CD8-positive, alpha-beta T cell (primary cell): ENCODE measurements at regions of chr7 and their contacts with region 1.

Region 1: GRCh38 chr7:100586266-100587025 is at the start of gene FBXO24:
- DNase-seq: peak; percentile 98 to 100 (median 99)
- ATAC-seq: peak; percentile 80
- H3K4me3 ChIP-seq: peak within 1 kb of the TSS; percentile 93 to 96
- H3K4me3 Mint-ChIP-seq: peak within 1 kb of the TSS; percentile 96
- H3K27ac ChIP-seq: peak within 1 kb of the TSS; percentile 74 to 94
- H3K27ac Mint-ChIP-seq: peak within 1 kb of the TSS; percentile 57
- H3K4me1 ChIP-seq: peaks cover 22% of the 10 kb centered on the region
- H3K4me1 Mint-ChIP-seq: peaks cover 39% of the 10 kb centered on the region
- H3K27me3 ChIP-seq: no peaks in the 10 kb centered on the region
- H3K27me3 Mint-ChIP-seq: peaks cover 3% of the 10 kb centered on the region
- CTCF ChIP-seq: no peak
- total RNA-seq, gene FBXO24: 0.30 to 0.53 TPM

Region 2: GRCh38 chr7:99997545-99998137 is 588.8 kb before region 1 on chr7:
- CTCF ChIA-PET with region 1: no interaction called
- POLR2A ChIA-PET with region 1: no interaction called
- intact Hi-C with region 1: no loop called
- DNase-seq: peak; percentile 51 to 91 (median 74)
- ATAC-seq: peak; percentile 88
- H3K4me3 ChIP-seq: peak overlapping the region; percentile 48 to 54
- H3K4me3 Mint-ChIP-seq: peak overlapping the region; percentile 73
- H3K27ac ChIP-seq: peak overlapping the region; percentile 64 to 82
- H3K27ac Mint-ChIP-seq: peak overlapping the region; percentile 92
- H3K4me1 ChIP-seq: peaks cover 12% of the 10 kb centered on the region
- H3K4me1 Mint-ChIP-seq: peaks cover 11% of the 10 kb centered on the region
- H3K27me3 ChIP-seq: no peaks in the 10 kb centered on the region
- H3K27me3 Mint-ChIP-seq: no peaks in the 10 kb centered on the region
- CTCF ChIP-seq: no peak

Region 3: DNA sequence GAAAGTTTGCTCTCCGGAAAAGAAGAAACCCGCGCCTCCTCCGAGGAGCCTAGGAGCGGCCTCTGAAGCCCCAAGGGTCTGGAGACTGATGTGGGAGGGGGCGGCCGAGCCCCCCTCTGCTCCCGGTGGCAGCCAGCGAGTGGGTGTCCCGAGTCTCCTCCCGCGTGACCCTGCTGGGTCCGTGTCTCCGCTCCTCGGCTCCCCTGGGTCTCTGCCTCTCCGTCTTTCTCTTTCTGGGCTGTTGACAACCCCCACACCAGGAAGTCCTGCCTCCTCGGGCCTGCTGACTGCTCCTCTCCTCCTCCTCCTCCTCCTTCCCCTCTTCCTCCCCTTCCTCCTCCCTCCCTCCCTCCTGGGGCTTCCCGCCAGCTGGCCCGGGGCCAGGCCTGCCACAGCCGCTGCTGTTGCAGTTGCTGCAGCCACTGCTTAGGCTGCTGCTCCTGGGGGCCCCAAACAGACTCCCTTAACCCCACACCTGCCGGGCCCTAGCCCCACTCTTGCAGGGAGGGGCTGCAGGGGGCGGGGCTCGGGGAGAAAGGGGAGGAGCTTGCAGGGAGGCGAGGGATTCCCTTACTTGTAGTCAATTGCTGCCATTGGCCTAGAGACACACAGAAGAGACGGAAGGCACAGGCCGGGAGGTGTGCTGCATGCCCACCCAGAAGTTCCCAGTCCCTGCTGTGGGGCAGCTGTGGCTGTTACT is 107.3 kb before region 1 on chr7 and contains the start of gene TSC22D4:
- CTCF ChIA-PET with region 1: interaction called, 5 read pairs
- POLR2A ChIA-PET with region 1: interaction called, 5 read pairs
- intact Hi-C with region 1: loop called in 1 of 2 experiments (anchors 1 kb)
- DNase-seq: peak; percentile 85 to 97 (median 94)
- ATAC-seq: peak; percentile 69
- H3K4me3 ChIP-seq: peak within 1 kb of the TSS; percentile 82 to 96
- H3K4me3 Mint-ChIP-seq: peak within 1 kb of the TSS; percentile 93
- H3K27ac ChIP-seq: peak within 1 kb of the TSS; percentile 72 to 75
- H3K27ac Mint-ChIP-seq: peak within 1 kb of the TSS; percentile 89
- H3K4me1 ChIP-seq: peaks cover 54% of the 10 kb centered on the region
- H3K4me1 Mint-ChIP-seq: peaks cover 44% of the 10 kb centered on the region
- H3K27me3 ChIP-seq: no peaks in the 10 kb centered on the region
- H3K27me3 Mint-ChIP-seq: no peaks in the 10 kb centered on the region
- CTCF ChIP-seq: no peak
- total RNA-seq, gene TSC22D4: 30.7 to 32.3 TPM

Region 4: GRCh38 chr7:100568896-100569844 is 17.3 kb before region 1 on chr7:
- CTCF ChIA-PET with region 1: interaction called, 210 read pairs
- POLR2A ChIA-PET with region 1: interaction called, 46 read pairs
- intact Hi-C with region 1: loop called (anchors 1 kb)
- DNase-seq: peak in 7 of 9 experiments; percentile 32 to 76 (median 63)
- ATAC-seq: peak; percentile 30
- H3K4me3 ChIP-seq: peak overlapping the region; percentile 41 to 50
- H3K4me3 Mint-ChIP-seq: peak overlapping the region; percentile 66
- H3K27ac ChIP-seq: peak overlapping the region; percentile 40 to 49
- H3K27ac Mint-ChIP-seq: peak overlapping the region; percentile 69
- H3K4me1 ChIP-seq: peaks cover 54% of the 10 kb centered on the region
- H3K4me1 Mint-ChIP-seq: peaks cover 41% of the 10 kb centered on the region
- H3K27me3 ChIP-seq: no peaks in the 10 kb centered on the region
- H3K27me3 Mint-ChIP-seq: no peaks in the 10 kb centered on the region
- CTCF ChIP-seq: peak; percentile 38

Region 5: DNA sequence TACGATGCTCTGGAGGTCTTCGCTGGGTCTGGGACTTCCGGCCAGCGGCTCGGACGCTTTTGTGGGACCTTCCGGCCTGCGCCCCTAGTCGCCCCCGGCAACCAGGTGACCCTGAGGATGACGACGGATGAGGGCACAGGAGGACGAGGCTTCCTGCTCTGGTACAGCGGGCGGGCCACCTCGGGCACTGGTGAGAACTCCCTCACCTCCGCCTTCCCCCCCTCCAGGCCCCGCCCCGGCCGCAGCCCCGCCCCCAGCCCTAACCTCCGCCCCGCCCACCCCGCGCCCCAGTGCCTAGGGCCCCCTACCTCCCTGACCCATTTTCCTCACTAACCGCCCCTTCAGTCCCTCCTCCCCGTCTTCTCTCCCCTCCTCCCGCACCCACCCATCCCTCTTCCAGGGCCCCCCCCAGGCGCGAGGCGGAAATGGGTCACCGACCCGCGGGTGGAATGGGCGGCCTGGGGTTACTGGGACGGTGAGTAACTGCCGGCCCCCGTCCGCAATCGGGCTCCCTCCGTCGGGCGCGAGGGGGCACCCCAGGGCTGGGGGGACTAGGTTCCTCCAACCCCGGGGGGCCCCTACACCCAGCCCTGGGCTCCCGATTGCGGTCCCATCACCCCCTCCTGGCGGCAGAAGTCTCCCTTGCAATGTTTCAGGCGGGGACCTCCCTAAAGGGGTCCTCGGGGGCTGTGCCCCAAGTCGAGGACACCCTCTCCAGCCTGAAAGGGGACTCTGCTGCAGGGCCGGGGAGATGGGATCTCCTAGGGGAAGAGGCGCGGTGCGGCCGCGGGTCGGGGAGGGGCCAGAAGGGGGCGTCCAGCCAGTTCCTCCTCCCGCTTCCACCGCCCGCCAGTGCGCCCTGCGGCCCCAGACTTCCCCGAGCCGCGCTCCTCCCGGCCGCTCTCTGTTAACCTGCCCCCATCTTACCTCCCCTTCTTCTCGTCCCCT is 17.9 kb after region 1 on chr7:
- CTCF ChIA-PET with region 1: interaction called, 9 read pairs
- POLR2A ChIA-PET with region 1: interaction called, 11 read pairs
- intact Hi-C with region 1: loop called (anchors 1 kb)
- DNase-seq: peak; percentile 45 to 87 (median 77)
- ATAC-seq: peak; percentile 76
- H3K4me3 ChIP-seq: peak overlapping the region; percentile 62 to 79
- H3K4me3 Mint-ChIP-seq: peak overlapping the region; percentile 85
- H3K27ac ChIP-seq: peak overlapping the region; percentile 53 to 70
- H3K27ac Mint-ChIP-seq: peak overlapping the region; percentile 87
- H3K4me1 ChIP-seq: peaks cover 19% of the 10 kb centered on the region
- H3K4me1 Mint-ChIP-seq: peaks cover 22% of the 10 kb centered on the region
- H3K27me3 ChIP-seq: peaks cover 0 to 3% of the 10 kb centered on the region in 2 experiments
- H3K27me3 Mint-ChIP-seq: no peaks in the 10 kb centered on the region
- CTCF ChIP-seq: peak; percentile 50

Region 6: GRCh38 chr7:100611974-100612729 is 25.7 kb after region 1 on chr7 and contains the start of gene MOSPD3:
- CTCF ChIA-PET with region 1: interaction called, 9 read pairs
- POLR2A ChIA-PET with region 1: interaction called, 58 read pairs
- intact Hi-C with region 1: loop called (anchors 1 kb)
- DNase-seq: peak; percentile 96 to 100 (median 98)
- ATAC-seq: peak; percentile 89
- H3K4me3 ChIP-seq: peak within 1 kb of the TSS; percentile 68 to 96
- H3K4me3 Mint-ChIP-seq: peak within 1 kb of the TSS; percentile 99
- H3K27ac ChIP-seq: peak within 1 kb of the TSS; percentile 93 to 98
- H3K27ac Mint-ChIP-seq: peak within 1 kb of the TSS; percentile 100
- H3K4me1 ChIP-seq: peaks cover 19% of the 10 kb centered on the region
- H3K4me1 Mint-ChIP-seq: peaks cover 24% of the 10 kb centered on the region
- H3K27me3 ChIP-seq: no peaks in the 10 kb centered on the region
- H3K27me3 Mint-ChIP-seq: no peaks in the 10 kb centered on the region
- CTCF ChIP-seq: no peak
- total RNA-seq, gene MOSPD3: 10.3 to 10.5 TPM

Region 7: DNA sequence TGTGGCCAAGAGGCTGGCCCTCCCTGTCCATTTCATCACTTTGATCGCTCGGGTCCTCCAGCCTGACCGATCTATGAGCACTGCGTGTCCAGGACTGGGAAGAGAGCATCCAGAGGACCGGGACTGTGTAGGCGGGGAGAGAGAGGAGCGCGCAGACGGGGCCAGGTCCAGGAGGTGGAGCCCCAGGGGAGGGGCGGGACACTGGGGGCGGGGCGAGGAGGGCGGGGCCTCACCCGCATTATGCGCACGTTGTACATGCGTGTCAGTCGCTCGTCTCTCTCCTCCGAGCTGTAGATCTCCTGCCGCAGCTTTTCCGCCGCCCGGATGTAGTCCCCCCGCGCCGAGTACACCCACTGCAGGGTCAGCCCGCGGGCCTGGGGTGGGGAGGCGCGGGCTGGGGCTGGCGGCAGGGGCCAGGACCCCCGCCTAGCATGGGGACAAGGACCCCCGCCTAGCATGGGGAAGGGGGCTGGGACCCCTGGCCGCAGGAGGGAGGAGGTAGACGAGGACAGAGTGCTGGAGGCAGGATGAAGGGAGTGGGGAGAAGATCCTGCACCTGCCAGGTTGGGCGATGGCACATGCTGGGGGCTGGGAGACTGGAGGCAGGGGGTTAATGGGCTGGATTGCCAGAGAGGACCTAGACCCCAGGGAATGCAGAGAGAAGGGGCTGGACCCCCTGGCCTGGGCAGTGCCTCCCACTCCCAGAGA is 40.2 kb after region 1 on chr7:
- CTCF ChIA-PET with region 1: interaction called, 3 read pairs
- POLR2A ChIA-PET with region 1: interaction called, 17 read pairs
- intact Hi-C with region 1: loop called (anchors 1 kb)
- DNase-seq: peak; percentile 82 to 94 (median 88)
- ATAC-seq: peak; percentile 99
- H3K4me3 ChIP-seq: peak overlapping the region; percentile 40 to 45
- H3K4me3 Mint-ChIP-seq: peak overlapping the region; percentile 70
- H3K27ac ChIP-seq: peak overlapping the region; percentile 56 to 78
- H3K27ac Mint-ChIP-seq: peak overlapping the region; percentile 80
- H3K4me1 ChIP-seq: peaks cover 14% of the 10 kb centered on the region
- H3K4me1 Mint-ChIP-seq: peaks cover 35% of the 10 kb centered on the region
- H3K27me3 ChIP-seq: no peaks in the 10 kb centered on the region
- H3K27me3 Mint-ChIP-seq: no peaks in the 10 kb centered on the region
- CTCF ChIP-seq: no peak